ENCODE measurements at regions of chr4 and their contacts with region 1.

Region 1: DNA sequence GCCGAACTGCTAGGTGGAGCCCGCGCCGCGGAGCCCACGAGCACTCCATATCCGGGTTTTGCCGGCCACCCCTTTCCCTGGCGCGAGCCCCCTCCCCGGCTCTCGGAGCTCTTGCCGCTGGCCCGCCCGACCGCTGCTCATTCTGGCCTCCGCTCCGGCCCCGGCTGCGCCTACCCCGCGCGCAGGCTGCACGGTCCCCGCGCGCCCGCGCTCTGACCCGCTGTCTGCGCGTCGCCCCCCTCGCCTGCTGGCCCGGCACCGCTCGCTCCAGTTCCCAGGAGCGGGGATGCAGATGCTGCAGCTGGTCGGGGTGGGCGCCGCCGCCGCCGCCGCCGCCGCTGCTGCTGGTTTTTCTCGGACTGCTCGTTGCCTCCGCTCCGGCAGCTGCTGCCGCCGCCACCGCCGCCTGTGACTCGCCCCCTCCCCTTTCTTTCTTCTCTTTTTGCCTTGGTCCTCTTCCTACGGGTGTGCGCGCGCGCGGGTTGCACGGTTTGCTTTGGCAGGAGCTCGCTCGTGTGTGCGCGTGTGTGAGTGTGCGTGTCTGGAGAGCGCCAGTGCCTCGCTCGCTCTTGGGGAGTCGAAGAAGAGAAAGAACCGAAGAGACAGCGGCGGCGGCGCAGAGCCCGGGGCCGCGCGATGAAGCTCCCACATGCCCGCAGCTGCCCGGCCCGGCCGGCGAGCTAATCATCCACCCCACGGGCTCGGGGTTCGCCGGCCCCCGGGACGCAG is at the start of gene ADGRL3:
- DNase-seq: peak; percentile 30 to 68
- H3K4me3 ChIP-seq: peak within 1 kb of the TSS; percentile 83 to 89
- H3K27ac ChIP-seq: peak within 1 kb of the TSS; percentile 85 to 86
- H3K4me1 ChIP-seq: peaks cover 0 to 6% (median 2%) of the 10 kb centered on the region in 4 donors
- H3K27me3 ChIP-seq: no peaks in the 10 kb centered on the region
- CTCF ChIP-seq: no peak

Region 2: DNA sequence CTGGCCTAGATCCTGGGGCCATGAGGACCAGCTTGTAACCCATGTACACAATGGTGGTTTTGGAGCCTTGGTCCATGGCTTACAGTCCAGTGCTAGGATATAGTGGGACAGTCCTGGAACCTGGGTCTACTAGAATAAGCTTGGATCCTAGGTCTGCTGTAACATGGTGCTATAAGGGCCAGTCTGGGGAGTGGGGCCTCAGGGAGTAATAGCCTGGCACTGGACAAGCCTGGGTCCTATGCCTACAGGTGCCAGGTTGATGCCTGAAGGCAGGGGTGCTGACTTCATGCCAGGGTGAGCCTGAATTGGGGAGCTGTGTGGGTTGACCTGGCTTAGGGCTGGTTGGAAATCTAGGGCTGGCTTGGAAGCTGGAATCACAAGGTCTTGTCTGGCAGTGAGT is 756.6 kb before region 1 on chr4:
- intact Hi-C with region 1: no loop called
- DNase-seq: no peak
- H3K4me3 ChIP-seq: no peak overlapping the region
- H3K27ac ChIP-seq: no peak overlapping the region
- H3K4me1 ChIP-seq: no peaks in the 10 kb centered on the region
- H3K27me3 ChIP-seq: no peaks in the 10 kb centered on the region
- CTCF ChIP-seq: no peak

Region 3: GRCh38 chr4:60948008-60948407 is 252.3 kb before region 1 on chr4:
- intact Hi-C with region 1: no loop called
- DNase-seq: no peak
- H3K4me3 ChIP-seq: no peak overlapping the region
- H3K27ac ChIP-seq: no peak overlapping the region
- H3K4me1 ChIP-seq: no peaks in the 10 kb centered on the region
- H3K27me3 ChIP-seq: no peaks in the 10 kb centered on the region
- CTCF ChIP-seq: no peak

Region 4: GRCh38 chr4:61211781-61212180 is 11.4 kb after region 1 on chr4:
- intact Hi-C with region 1: no loop called
- DNase-seq: no peak
- H3K4me3 ChIP-seq: peak overlapping the region in 1 of 2 donors; percentile 6
- H3K27ac ChIP-seq: peak overlapping the region; percentile 45 to 53
- H3K4me1 ChIP-seq: peaks cover 0 to 74% (median 7%) of the 10 kb centered on the region in 4 donors
- H3K27me3 ChIP-seq: no peaks in the 10 kb centered on the region
- CTCF ChIP-seq: no peak

Region 5: DNA sequence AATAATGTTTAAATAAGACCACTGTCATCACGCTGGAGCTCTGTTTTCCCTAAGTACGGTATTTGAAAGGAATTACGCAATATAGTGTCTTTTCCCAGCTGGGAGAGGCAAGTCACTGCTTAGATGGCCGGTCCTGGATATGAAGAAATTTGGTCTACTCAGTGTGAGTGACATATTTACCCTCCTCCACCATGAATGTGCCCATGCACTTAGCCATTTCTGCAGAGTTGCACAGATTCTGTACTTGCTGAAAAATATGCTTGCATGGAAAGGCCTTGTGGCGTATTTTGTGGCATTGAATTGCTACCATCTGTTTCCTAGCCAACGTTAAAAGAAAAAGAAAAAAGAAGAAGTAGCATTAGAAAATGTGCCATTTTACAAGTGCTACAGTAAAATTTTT is 72.9 kb after region 1 on chr4:
- intact Hi-C with region 1: loop called (anchors 10 kb)
- DNase-seq: peak in 1 of 2 donors; percentile 22
- H3K4me3 ChIP-seq: peak overlapping the region in 1 of 2 donors; percentile 1
- H3K27ac ChIP-seq: peak overlapping the region; percentile 52 to 77
- H3K4me1 ChIP-seq: peaks cover 0 to 84% (median 2%) of the 10 kb centered on the region in 4 donors
- H3K27me3 ChIP-seq: peaks cover 0 to 3% of the 10 kb centered on the region in 2 donors
- CTCF ChIP-seq: no peak

Region 6: DNA sequence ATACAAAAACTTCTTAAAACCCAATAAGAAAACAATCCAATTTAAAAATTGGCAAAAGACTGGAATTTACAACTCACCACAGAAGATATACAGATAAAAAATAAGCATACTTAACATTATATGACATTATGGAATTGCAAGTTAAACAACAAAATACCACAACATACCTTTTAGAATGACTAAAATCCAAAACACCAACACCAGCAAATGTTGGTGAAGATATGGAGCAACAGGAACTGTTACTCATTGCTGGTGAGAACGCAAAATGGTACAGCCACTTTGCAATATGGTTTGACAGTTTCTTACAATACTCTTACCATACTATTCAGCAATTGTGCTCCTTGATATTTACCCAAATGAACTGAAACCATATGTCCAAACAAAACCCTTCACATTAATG is 112.2 kb after region 1 on chr4:
- intact Hi-C with region 1: no loop called
- DNase-seq: no peak
- H3K4me3 ChIP-seq: no peak overlapping the region
- H3K27ac ChIP-seq: no peak overlapping the region
- H3K4me1 ChIP-seq: peaks cover 0 to 20% (median 3%) of the 10 kb centered on the region in 4 donors
- H3K27me3 ChIP-seq: no peaks in the 10 kb centered on the region
- CTCF ChIP-seq: no peak

Region 7: GRCh38 chr4:61374447-61374891 is 174.1 kb after region 1 on chr4:
- intact Hi-C with region 1: loop called (anchors 10 kb)
- DNase-seq: no peak
- H3K4me3 ChIP-seq: no peak overlapping the region
- H3K27ac ChIP-seq: peak overlapping the region; percentile 54 to 56
- H3K4me1 ChIP-seq: peaks cover 0 to 34% (median 8%) of the 10 kb centered on the region in 4 donors
- H3K27me3 ChIP-seq: no peaks in the 10 kb centered on the region
- CTCF ChIP-seq: no peak